Activated T-helper 1 cell treated with anti-CD3 and anti-CD28 coated beads, Interleukin-12 subunit alpha, Interleukin-12 subunit beta, Interleukin-2, Interleukin-4 antibody, amounts not matched to agents 30 ng/mL and 10 ng/mL and 1 ng/mL, durations not matched to agents 14 hours and 24 hours and 36 hours (primary cell): ENCODE measurements at regions of chr1 and their contacts with region 1.

Region 1: GRCh38 chr1:91712981-91713841 is 172.7 kb downstream of the TGFBR3 start:
- DNase-seq: peak; percentile 52
- H3K4me3 Mint-ChIP-seq: peak overlapping the region; percentile 61
- H3K27ac Mint-ChIP-seq: peak overlapping the region; percentile 94
- H3K4me1 Mint-ChIP-seq: peaks cover 59% of the 10 kb centered on the region
- H3K27me3 Mint-ChIP-seq: peaks cover 4% of the 10 kb centered on the region

Region 2: GRCh38 chr1:91523482-91523881 is 189.7 kb before region 1 on chr1:
- intact Hi-C with region 1: loop called (anchors 1 kb)
- DNase-seq: no peak
- H3K4me3 Mint-ChIP-seq: no peak overlapping the region
- H3K27ac Mint-ChIP-seq: peak overlapping the region; percentile 33
- H3K4me1 Mint-ChIP-seq: peaks cover 41% of the 10 kb centered on the region
- H3K27me3 Mint-ChIP-seq: no peaks in the 10 kb centered on the region

Region 3: GRCh38 chr1:91591175-91591968 is 121.8 kb before region 1 on chr1:
- intact Hi-C with region 1: loop called (anchors 2 kb)
- DNase-seq: no peak
- H3K4me3 Mint-ChIP-seq: peak overlapping the region; percentile 73
- H3K27ac Mint-ChIP-seq: peak overlapping the region; percentile 79
- H3K4me1 Mint-ChIP-seq: peaks cover 40% of the 10 kb centered on the region
- H3K27me3 Mint-ChIP-seq: peaks cover 4% of the 10 kb centered on the region

Region 4: DNA sequence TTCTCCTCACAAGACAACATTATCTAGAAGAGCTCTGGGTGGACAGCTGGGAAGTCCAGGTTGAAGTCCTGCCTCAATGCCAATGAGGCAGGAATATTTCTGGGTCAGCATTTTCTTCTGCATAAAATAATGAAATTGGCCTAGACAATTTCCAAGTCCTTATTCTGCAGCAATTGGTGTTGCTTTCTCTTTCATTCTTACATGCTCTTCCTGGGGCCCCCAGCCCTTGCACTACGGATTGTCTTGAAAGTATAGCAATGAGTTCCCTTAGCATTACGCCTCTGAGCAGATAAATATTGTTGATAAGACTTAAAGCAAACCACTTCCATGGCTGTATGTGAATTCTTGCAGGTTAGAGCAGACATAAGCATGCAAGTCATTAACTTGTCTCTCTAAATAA is 15.8 kb before region 1 on chr1:
- intact Hi-C with region 1: loop called (anchors 1 kb)
- DNase-seq: peak; percentile 69
- H3K4me3 Mint-ChIP-seq: peak overlapping the region; percentile 72
- H3K27ac Mint-ChIP-seq: peak overlapping the region; percentile 86
- H3K4me1 Mint-ChIP-seq: peaks cover 41% of the 10 kb centered on the region
- H3K27me3 Mint-ChIP-seq: peaks cover 1% of the 10 kb centered on the region

Region 5: GRCh38 chr1:91732291-91733107 is 19.3 kb after region 1 on chr1:
- intact Hi-C with region 1: loop called (anchors 1 kb)
- DNase-seq: no peak
- H3K4me3 Mint-ChIP-seq: no peak overlapping the region
- H3K27ac Mint-ChIP-seq: peak overlapping the region; percentile 37
- H3K4me1 Mint-ChIP-seq: peaks cover 51% of the 10 kb centered on the region
- H3K27me3 Mint-ChIP-seq: peaks cover 8% of the 10 kb centered on the region

Region 6: GRCh38 chr1:91768787-91769725 is 55.8 kb after region 1 on chr1:
- intact Hi-C with region 1: no loop called
- DNase-seq: no peak
- H3K4me3 Mint-ChIP-seq: no peak overlapping the region
- H3K27ac Mint-ChIP-seq: no peak overlapping the region
- H3K4me1 Mint-ChIP-seq: peaks cover 8% of the 10 kb centered on the region
- H3K27me3 Mint-ChIP-seq: peaks cover 4% of the 10 kb centered on the region

Region 7: GRCh38 chr1:91924146-91924545 is 210.9 kb after region 1 on chr1:
- intact Hi-C with region 1: loop called (anchors 1 kb)
- DNase-seq: no peak
- H3K4me3 Mint-ChIP-seq: no peak overlapping the region
- H3K27ac Mint-ChIP-seq: peak overlapping the region; percentile 3
- H3K4me1 Mint-ChIP-seq: peaks cover 19% of the 10 kb centered on the region
- H3K27me3 Mint-ChIP-seq: peaks cover 11% of the 10 kb centered on the region